PC-3 (cell line): ENCODE measurements at regions of chr12 and their contacts with region 1.

Region 1: DNA sequence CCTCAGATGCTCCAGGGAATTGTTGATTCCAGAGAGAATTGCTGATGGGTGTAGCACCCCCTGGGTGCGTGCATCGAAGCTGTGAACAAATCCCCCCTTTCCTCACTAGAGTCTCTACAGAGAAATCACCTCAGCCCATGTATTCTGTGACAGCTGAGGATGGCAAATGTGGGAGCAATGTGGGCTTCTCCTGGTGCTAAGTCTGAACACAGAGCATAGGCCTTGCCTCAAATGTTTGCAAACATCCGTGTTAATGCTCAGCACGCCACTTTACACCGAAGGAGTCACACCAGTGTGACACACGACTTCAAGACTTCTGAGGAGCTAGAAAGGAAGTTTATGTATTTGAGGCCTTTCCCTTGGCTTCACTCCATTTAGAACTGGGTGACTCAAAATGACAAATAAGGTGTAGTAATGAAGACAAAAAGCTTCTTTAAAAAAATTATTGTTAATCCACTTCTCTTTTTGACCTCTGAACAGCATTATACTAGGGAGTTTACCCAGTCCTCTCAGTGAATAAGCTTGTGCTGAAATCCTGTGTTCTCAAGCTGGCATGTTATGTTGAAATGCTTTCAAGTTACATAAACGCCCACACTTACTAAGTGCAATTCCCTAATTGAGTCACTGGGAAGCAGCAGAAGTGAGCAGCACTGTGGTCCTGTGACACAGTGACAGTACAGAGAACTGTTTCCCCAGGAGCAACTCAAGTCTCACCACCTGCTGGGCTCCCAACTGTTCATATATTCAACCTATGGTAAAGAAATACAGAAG is 92.9 kb downstream of the FAR2 start:
- DNase-seq: peak; percentile 100
- ATAC-seq: peak; percentile 84
- H3K4me3 ChIP-seq: peak overlapping the region; percentile 3; the same call in 1 of the 2 replicates
- H3K27ac ChIP-seq: peak overlapping the region; percentile 83
- H3K4me1 ChIP-seq: peaks cover 64% of the 10 kb centered on the region
- H3K27me3 ChIP-seq: no peaks in the 10 kb centered on the region
- CTCF ChIP-seq: peak; percentile 54

Region 2: DNA sequence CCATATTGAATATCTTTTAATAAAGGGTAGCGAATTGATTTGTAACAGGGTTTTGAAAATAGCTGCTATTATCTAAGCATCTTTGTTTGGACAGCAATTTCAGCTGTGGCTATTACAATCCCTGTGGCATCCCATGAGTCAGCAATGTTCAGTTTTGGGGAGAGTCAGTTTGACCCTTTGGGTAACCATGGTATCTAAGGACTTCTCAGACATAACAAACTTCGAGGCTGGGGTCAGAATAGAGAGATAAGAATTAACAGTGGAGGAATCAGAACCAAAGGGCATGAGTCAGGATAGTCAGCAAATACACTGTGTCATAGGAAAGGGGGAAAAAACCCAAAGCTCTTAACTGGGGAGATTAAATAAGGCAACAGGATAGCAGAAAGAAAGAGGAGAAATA is 1257.7 kb before region 1 on chr12:
- CTCF ChIA-PET with region 1: no interaction called
- POLR2A ChIA-PET with region 1: no interaction called
- intact Hi-C with region 1: loop called (anchors 10 kb)
- DNase-seq: peak; percentile 100
- ATAC-seq: peak; percentile 54
- H3K4me3 ChIP-seq: peak overlapping the region; percentile 6
- H3K27ac ChIP-seq: peak overlapping the region; percentile 73
- H3K4me1 ChIP-seq: peaks cover 47% of the 10 kb centered on the region
- H3K27me3 ChIP-seq: no peaks in the 10 kb centered on the region
- CTCF ChIP-seq: no peak

Region 3: DNA sequence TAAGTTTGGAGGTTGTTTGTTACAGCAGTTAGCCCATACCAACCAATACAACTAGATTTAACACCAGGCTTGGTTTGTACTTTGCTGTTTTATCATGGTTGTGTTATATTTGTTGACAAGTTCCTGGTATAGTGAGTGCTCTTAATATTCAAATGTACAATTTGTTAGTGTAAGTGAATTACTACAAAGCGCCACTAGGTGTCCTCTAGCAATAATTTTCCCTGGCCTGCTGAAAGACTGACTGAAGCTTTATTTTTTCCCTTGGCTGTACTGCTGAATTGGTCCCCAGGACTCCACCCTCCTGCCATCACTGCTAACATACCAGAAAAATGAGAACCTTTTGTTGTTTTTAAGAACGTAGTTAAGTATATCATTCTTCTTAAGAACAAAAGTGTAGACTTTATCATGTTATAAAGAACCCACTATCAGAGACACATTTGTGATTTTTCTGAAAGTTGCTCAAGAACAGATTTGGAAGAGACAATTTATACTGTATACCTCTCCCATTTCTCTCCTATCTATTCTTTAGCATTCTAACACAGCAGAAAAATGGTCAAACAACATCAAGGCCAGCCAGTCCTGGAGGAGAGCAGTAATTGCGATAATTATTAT is 168.3 kb before region 1 on chr12:
- CTCF ChIA-PET with region 1: interaction called, 13 read pairs
- POLR2A ChIA-PET with region 1: no interaction called
- intact Hi-C with region 1: loop called (anchors 1 kb)
- DNase-seq: peak; percentile 92
- ATAC-seq: peak; percentile 58
- H3K4me3 ChIP-seq: no peak overlapping the region
- H3K27ac ChIP-seq: peak overlapping the region; percentile 43
- H3K4me1 ChIP-seq: peaks cover 31% of the 10 kb centered on the region
- H3K27me3 ChIP-seq: no peaks in the 10 kb centered on the region
- CTCF ChIP-seq: peak; percentile 99

Region 4: GRCh38 chr12:29164477-29165393 is 77.3 kb before region 1 on chr12:
- CTCF ChIA-PET with region 1: no interaction called
- POLR2A ChIA-PET with region 1: interaction called, 3 read pairs
- intact Hi-C with region 1: loop called (anchors 1 kb)
- DNase-seq: peak; percentile 91
- ATAC-seq: peak; percentile 97
- H3K4me3 ChIP-seq: no peak overlapping the region; the same call in 1 of the 2 replicates
- H3K27ac ChIP-seq: peak overlapping the region; percentile 57
- H3K4me1 ChIP-seq: peaks cover 30% of the 10 kb centered on the region
- H3K27me3 ChIP-seq: no peaks in the 10 kb centered on the region
- CTCF ChIP-seq: no peak

Region 5: GRCh38 chr12:29207120-29207519 is 34.9 kb before region 1 on chr12:
- CTCF ChIA-PET with region 1: no interaction called
- POLR2A ChIA-PET with region 1: no interaction called
- intact Hi-C with region 1: no loop called
- DNase-seq: peak; percentile 24
- ATAC-seq: peak; percentile 40
- H3K4me3 ChIP-seq: no peak overlapping the region
- H3K27ac ChIP-seq: no peak overlapping the region
- H3K4me1 ChIP-seq: no peaks in the 10 kb centered on the region
- H3K27me3 ChIP-seq: no peaks in the 10 kb centered on the region
- CTCF ChIP-seq: peak; percentile 28; the same call in 1 of the 2 replicates

Region 6: GRCh38 chr12:29317556-29318363 is 75.8 kb after region 1 on chr12:
- CTCF ChIA-PET with region 1: interaction called, 19 read pairs
- POLR2A ChIA-PET with region 1: no interaction called
- intact Hi-C with region 1: loop called (anchors 1 kb)
- DNase-seq: peak; percentile 96
- ATAC-seq: peak; percentile 85
- H3K4me3 ChIP-seq: no peak overlapping the region
- H3K27ac ChIP-seq: no peak overlapping the region
- H3K4me1 ChIP-seq: peaks cover 38% of the 10 kb centered on the region
- H3K27me3 ChIP-seq: no peaks in the 10 kb centered on the region
- CTCF ChIP-seq: peak; percentile 100

Region 7: DNA sequence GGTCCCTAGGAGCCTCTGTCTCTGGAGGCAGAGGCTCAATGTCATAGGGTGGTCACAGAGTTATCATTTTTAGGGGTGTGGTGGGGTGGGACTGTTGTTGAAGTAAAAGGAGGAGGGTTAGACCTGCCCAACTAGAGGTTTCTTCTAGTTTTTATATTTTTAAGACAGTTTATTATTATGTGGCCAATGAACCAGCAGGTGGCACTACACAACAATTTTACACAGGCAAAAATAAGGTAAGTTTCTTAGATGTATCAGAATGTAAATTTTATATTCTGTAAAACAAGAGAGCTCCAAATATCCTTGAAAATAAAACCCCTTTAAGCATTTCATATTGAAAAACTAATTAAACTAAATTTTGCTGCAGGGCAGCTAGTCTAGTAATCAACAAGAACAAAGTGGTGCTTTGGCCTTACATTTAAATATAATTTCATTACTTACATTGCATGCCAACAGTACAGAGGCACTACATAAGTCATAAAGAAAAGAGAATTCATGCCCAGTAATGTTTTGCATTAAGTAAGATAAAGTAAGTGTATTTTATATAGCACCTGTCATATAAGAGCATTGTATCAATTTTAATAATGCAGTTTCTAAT is 277.7 kb after region 1 on chr12:
- CTCF ChIA-PET with region 1: no interaction called
- POLR2A ChIA-PET with region 1: no interaction called
- intact Hi-C with region 1: loop called (anchors 5 kb)
- DNase-seq: peak; percentile 86
- ATAC-seq: peak; percentile 15; the same call in 1 of the 2 replicates
- H3K4me3 ChIP-seq: no peak overlapping the region
- H3K27ac ChIP-seq: no peak overlapping the region
- H3K4me1 ChIP-seq: peaks cover 11% of the 10 kb centered on the region
- H3K27me3 ChIP-seq: no peaks in the 10 kb centered on the region
- CTCF ChIP-seq: peak; percentile 95